ENCODE measurements at regions of chr14 and their contacts with region 1.

Region 1: DNA sequence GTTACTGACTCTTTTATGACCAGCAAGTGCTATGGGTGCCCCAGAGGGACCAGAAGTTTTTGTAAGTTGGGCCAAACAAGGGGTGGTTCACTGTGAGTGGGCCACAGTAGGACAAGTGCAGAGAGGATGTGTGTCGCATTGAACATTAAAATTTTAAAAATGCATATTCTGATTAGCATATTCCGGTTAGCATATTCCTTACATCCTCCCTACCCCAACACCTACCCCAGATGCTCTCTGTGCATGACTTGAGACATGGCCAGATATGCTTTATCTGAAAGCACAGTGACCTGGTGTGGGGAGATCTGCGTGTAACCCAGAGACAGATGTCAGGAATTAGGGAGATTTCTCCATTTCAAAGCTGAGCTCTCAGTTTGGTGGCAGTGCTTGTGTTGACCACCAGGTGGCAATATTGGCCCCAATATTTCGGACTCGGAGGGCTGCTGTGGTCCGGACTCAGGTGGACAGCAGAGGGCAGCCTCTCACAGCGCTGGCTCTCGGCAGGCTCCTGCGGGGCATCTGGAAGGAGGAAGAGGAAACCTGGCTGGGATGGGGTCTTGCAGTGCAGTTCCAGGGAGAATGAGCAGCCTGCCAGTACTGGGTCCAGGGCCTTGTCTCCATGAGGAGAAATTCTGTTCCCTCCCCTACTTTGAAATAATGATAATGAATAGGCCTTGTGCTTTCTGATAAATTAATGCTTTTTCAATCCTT is 1.6 kb upstream of the CEBPE start:
- DNase-seq: peak; percentile 90
- CTCF ChIP-seq: peak; percentile 100

Region 2: DNA sequence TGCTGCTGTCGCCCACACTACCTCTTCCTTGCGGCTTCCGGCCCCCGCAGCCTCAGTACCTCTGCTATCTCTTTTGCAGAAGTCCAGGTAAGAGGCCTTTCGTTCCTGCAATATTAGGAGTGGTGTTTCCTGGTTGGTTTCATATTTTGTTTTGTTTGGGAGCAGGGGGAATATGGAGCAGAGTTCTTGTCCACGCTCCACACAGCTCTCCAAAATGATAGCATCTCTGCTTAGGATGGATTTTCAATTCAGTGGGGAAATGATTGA is 353.4 kb before region 1 on chr14:
- CTCF ChIA-PET with region 1: no interaction called
- POLR2A ChIA-PET with region 1: no interaction called
- DNase-seq: no peak
- CTCF ChIP-seq: no peak

Region 3: GRCh38 chr14:23034483-23035302 is 86.0 kb before region 1 on chr14 and contains the start of gene PSMB5:
- CTCF ChIA-PET with region 1: no interaction called
- POLR2A ChIA-PET with region 1: no interaction called
- DNase-seq: peak; percentile 90
- CTCF ChIP-seq: no peak

Region 4: DNA sequence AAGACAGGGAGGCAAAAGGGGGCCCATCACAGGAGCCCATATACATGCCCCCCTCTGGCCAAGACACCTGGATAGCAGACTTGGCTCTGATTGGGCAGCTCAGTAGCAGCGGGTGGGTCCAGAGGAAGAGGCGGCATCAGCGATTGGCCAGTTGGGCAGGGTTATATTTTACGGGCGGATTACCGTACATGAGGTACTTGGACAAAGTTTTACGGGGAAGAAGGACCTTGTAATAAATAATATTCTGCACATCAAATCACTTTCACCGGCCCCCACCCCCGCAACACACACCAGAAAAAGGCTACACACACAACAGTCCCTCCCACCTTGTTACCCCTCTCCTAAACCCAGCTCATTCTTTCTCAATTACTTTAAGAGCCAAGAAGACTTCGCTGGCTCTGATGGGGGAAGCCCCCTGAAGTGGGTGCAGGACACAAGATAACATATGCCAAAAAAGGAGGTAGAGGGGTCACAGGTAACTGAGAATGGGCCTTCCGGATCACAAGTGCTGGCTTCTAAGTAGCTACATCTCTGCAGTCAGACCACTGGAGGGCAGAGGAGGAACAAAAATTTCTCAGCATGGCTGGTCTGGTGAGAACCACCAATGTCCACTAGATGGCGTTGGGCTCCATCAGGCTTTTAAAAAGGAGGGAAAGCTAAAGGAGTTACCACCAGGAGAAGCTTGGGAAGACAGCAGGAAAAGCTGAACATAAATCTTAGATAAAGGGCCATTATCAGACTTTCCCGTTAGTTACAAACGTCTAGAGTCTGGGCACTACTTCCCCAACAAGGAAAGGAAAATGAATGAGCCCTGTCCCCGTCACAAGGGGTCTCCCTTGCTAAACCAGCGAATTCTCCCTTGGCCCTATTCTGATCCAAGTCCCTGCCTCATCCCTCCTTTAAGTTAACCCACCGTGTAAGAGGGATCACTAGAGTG is 52.0 kb before region 1 on chr14:
- CTCF ChIA-PET with region 1: interaction called, 21 read pairs
- POLR2A ChIA-PET with region 1: no interaction called
- DNase-seq: peak; percentile 91
- CTCF ChIP-seq: peak; percentile 95

Region 5: GRCh38 chr14:23106747-23107045 is 14.0 kb before region 1 on chr14:
- CTCF ChIA-PET with region 1: interaction called, 47 read pairs
- POLR2A ChIA-PET with region 1: no interaction called
- DNase-seq: no peak
- CTCF ChIP-seq: no peak

Region 6: DNA sequence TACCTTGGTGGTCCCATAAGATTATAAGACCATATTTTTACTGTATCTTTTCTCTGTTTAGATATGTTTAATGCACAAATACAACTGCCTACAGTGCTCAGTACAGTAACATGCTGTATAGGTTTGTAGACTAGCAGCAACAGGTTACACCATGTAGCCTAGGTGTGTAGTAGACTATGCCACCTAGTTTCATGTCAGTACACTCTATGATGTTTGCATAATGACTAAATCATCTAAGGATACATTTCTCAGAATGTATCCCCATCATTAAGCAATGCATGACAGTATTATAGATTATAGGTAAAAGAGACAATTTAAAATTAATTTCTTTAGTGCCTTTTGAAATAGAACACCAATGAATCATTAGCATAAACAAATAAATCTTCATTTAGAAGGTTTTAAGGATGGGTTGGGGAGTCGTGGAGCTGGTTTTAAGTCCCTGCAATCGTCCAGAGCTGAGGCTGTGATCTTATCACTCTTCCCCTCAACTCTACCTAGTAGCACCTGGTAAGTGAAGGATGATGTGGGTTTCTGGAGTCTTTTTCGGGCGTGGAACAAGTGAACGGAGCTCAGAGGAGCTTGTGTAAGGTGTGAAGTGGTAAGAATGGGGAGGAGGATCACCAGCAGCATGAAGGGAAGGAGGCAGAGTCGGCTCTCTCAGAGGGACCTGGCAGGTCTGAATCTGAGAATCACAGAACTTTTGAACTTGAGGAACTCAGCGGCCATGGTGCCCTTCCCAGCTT is 29.3 kb after region 1 on chr14:
- CTCF ChIA-PET with region 1: interaction called, 32 read pairs
- POLR2A ChIA-PET with region 1: no interaction called
- DNase-seq: no peak
- CTCF ChIP-seq: no peak

Region 7: DNA sequence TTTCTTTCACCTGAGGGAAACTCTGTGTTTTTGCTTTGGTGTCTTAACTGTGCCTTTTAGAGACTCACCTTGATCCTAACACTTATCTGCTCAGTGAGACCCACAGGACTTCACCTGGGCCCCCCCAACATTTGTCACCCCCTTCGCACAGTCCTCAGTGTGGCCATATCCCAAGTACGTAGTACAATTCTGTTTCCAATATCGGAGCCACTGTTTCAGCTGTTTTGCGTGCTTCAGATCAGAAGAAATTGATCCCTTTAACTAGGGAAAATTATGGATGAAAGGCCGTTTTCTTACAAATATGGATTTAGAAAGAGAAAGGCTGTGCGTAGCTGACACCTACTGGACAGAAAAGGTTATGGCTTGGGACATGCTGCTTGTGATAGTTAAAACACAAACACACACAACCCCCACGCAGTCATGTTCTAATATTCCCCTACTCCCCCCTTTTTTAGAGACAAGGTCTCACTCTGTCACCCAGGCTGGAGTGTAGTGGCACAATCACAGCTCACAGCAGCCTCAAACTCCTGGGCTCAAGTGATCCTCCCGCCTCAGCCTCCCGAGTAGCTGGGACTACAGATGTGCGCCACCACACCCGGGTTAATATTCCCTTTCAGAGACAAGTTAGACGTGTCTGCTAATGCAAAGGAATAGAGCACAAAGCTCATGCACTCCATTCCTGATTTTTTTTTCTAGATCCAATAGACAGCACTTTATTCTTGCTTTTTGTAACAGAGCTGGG is 66.4 kb after region 1 on chr14:
- CTCF ChIA-PET with region 1: interaction called, 164 read pairs
- POLR2A ChIA-PET with region 1: no interaction called
- DNase-seq: peak; percentile 65
- CTCF ChIP-seq: peak; percentile 54

Region 8: DNA sequence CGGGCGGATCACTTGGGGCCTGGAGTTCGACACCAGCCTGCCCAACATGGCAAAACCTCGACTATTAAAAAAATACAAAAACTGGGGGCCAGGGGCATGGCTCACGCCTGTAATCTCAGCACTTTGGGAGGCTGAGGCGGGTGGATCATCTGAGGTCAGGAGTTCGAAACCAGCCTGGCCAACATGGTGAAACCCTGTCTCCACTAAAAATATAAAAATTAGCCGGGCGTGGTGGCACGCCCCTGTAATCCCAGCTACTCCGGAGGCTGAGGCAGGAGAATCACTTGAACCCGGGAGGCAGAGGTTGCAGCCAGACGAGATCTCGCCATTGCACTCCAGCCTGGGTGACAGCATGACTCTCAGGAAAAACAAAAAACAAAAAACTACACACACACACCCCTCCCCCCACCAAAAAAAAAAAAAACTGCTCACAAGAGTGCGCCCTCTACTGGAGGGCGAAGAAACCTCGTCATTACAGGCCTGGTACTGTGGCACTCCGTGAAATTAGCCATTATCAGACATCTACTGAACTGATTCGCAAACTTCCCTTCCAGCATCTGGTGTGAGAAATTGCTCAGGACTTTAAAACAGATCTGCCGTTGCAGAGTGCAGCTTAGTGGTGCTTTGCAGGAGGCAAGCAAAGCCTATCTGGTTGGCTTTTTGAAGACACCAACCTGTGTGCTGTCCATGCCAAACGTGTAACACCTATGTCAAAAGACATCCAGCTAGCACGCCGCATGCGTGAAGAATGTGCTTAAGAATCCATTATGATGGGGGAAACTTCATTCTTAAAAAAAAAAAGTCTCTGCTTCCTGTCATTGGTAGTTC is 174.3 kb after region 1 on chr14:
- CTCF ChIA-PET with region 1: interaction called, 27 read pairs
- POLR2A ChIA-PET with region 1: no interaction called
- DNase-seq: no peak
- CTCF ChIP-seq: peak; percentile 76

Region 9: GRCh38 chr14:23379366-23380196 is 258.9 kb after region 1 on chr14:
- CTCF ChIA-PET with region 1: interaction called, 34 read pairs
- POLR2A ChIA-PET with region 1: no interaction called
- DNase-seq: peak; percentile 86
- CTCF ChIP-seq: peak; percentile 92